Heart right ventricle (tissue), 16 donors: ENCODE measurements at regions of chr18 and their contacts with region 1.

Region 1: DNA sequence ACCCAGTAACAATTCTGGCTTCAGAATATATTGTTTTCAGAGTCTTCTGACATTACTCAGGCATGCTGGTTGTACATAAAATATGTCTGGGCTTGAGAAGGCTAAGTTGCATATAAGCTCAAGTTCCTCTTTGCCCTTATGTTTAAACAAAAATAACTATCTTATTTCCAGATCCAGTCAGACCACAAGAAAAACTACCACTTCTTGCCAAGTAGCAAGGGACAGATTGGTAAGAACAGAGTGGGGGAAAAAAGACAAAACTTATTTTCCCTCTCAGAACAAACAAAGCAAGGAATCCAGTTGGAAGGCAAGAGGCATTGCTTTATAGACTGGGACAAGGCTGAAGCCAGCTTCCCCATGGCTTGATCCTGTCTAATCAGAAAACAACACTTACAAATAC is 1036.7 kb upstream of the CELF4 start:
- DNase-seq: no peak
- ATAC-seq: no peak
- H3K4me3 ChIP-seq: no peak overlapping the region
- H3K27ac ChIP-seq: no peak overlapping the region
- H3K4me1 ChIP-seq: no peaks in the 10 kb centered on the region
- H3K27me3 ChIP-seq: no peaks in the 10 kb centered on the region
- CTCF ChIP-seq: no peak

Region 2: DNA sequence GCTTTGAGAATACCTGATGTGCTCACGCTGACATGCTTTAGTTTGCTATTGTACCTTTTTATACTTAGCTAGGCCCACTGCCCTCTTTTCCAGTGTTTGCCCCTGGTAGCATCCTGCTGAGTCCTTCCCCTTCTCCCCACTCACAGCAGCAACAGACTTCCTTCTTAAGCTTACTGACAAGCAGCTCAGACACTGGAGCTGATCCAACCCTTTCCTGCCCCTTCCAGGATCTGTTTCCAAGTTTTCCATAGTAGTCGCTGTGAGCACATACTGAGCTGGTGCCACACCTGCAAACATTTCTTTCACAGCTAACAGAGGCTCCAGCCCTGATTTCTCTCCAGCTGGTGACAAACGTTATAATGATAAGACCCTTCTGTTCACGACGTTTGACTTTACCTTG is 45.3 kb before region 1 on chr18:
- intact Hi-C with region 1: no loop called
- DNase-seq: peak in 1 of 2 donors; percentile 8
- ATAC-seq: peak in 2 of 8 donors; percentile 24 to 42
- H3K4me3 ChIP-seq: no peak overlapping the region
- H3K27ac ChIP-seq: no peak overlapping the region
- H3K4me1 ChIP-seq: peaks cover 0 to 7% (median 0%) of the 10 kb centered on the region in 9 donors
- H3K27me3 ChIP-seq: no peaks in the 10 kb centered on the region
- CTCF ChIP-seq: no peak

Region 3: DNA sequence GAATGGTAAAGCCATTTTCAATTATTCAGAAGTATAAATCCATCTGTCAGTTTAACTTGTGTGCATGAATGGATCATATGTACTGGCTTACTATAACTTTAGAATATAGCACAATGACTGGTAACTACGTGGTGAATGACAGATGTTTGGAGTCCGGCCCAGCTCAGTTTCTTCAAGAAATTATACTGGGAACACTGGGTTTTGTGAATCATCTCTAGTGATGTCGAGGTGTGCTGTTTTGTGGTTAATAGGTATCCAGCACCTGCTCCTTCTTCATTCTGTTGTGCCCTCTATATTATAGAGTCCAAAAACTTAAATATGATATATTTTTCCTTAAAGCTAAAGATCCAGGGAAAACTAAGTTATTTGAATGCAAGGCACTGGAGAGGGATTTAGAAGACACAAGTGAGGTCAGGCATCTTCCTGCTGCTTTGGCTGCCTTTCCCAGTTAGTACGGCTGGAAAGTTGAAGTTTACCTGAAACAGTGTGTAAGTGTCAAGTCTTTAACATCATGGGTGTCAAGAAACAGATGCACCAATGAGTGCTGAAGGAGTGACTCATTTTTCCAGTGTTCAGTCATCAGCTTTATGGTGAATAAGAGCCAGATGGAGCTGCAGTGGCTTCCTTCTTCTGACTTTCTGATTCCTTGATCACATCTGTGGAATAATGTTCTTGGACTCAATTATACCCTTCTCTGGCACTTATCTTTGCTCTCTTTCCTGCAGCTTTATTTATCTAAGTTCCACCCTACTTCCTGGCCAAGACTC is 42.7 kb after region 1 on chr18:
- intact Hi-C with region 1: loop called in 1 of 10 experiments (anchors 10 kb)
- DNase-seq: no peak
- ATAC-seq: no peak
- H3K4me3 ChIP-seq: no peak overlapping the region
- H3K27ac ChIP-seq: no peak overlapping the region
- H3K4me1 ChIP-seq: peaks cover 0 to 9% (median 0%) of the 10 kb centered on the region in 9 donors
- H3K27me3 ChIP-seq: no peaks in the 10 kb centered on the region
- CTCF ChIP-seq: no peak

Region 4: GRCh38 chr18:40133253-40133652 is 1530.9 kb after region 1 on chr18:
- intact Hi-C with region 1: no loop called
- DNase-seq: no peak
- ATAC-seq: no peak
- H3K4me3 ChIP-seq: no peak overlapping the region
- H3K27ac ChIP-seq: no peak overlapping the region
- H3K4me1 ChIP-seq: no peaks in the 10 kb centered on the region
- H3K27me3 ChIP-seq: no peaks in the 10 kb centered on the region
- CTCF ChIP-seq: no peak